GM12878 (cell line): ENCODE measurements at regions of chr6 and their contacts with region 1.

Region 1: GRCh38 chr6:45677381-45678284 is 299.9 kb upstream of the SUPT3H start:
- DNase-seq: peak; percentile 30
- ATAC-seq: peak; percentile 79
- H3K4me3 ChIP-seq: peak overlapping the region; percentile 9; the same call in 1 of the 2 replicates
- H3K27ac ChIP-seq: no peak overlapping the region
- H3K4me1 ChIP-seq: peaks cover 19% of the 10 kb centered on the region
- H3K27me3 ChIP-seq: no peaks in the 10 kb centered on the region; a peak in 2 of 4 replicates
- CTCF ChIP-seq: no peak
- EP300 ChIP-seq: peak; percentile 25 to 40; a peak in 1 of 4 replicates
- POLR2A ChIP-seq: no peak
- RAD21 ChIP-seq: no peak

Region 2: GRCh38 chr6:45640081-45640491 is 37.5 kb before region 1 on chr6:
- CTCF ChIA-PET with region 1: no interaction called
- POLR2A ChIA-PET with region 1: no interaction called
- RAD21 ChIA-PET with region 1: no interaction called
- SMC1A ChIA-PET with region 1: no interaction called
- in situ Hi-C with region 1: no loop called
- intact Hi-C with region 1: no loop called
- DNase-seq: no peak
- ATAC-seq: no peak
- H3K4me3 ChIP-seq: no peak overlapping the region
- H3K27ac ChIP-seq: no peak overlapping the region
- H3K4me1 ChIP-seq: no peaks in the 10 kb centered on the region
- H3K27me3 ChIP-seq: no peaks in the 10 kb centered on the region; a peak in 2 of 4 replicates
- CTCF ChIP-seq: no peak
- EP300 ChIP-seq: no peak
- POLR2A ChIP-seq: no peak
- RAD21 ChIP-seq: no peak

Region 3: GRCh38 chr6:45650524-45651135 is 27.0 kb before region 1 on chr6:
- CTCF ChIA-PET with region 1: no interaction called
- POLR2A ChIA-PET with region 1: no interaction called
- RAD21 ChIA-PET with region 1: no interaction called
- SMC1A ChIA-PET with region 1: no interaction called
- in situ Hi-C with region 1: no loop called
- intact Hi-C with region 1: no loop called
- DNase-seq: no peak
- ATAC-seq: no peak
- H3K4me3 ChIP-seq: no peak overlapping the region
- H3K27ac ChIP-seq: no peak overlapping the region
- H3K4me1 ChIP-seq: no peaks in the 10 kb centered on the region
- H3K27me3 ChIP-seq: peaks cover 0 to 6% of the 10 kb centered on the region in 2 experiments; a peak in 3 of 4 replicates
- CTCF ChIP-seq: no peak
- EP300 ChIP-seq: no peak
- POLR2A ChIP-seq: no peak
- RAD21 ChIP-seq: no peak

Region 4: GRCh38 chr6:45697605-45698004 is 20.0 kb after region 1 on chr6:
- CTCF ChIA-PET with region 1: interaction called, 4 read pairs
- POLR2A ChIA-PET with region 1: no interaction called
- RAD21 ChIA-PET with region 1: no interaction called
- SMC1A ChIA-PET with region 1: no interaction called
- in situ Hi-C with region 1: no loop called
- intact Hi-C with region 1: loop called (anchors 2 kb)
- DNase-seq: no peak
- ATAC-seq: peak; percentile 71
- H3K4me3 ChIP-seq: no peak overlapping the region
- H3K27ac ChIP-seq: no peak overlapping the region
- H3K4me1 ChIP-seq: no peaks in the 10 kb centered on the region; the same call in 1 of the 2 replicates
- H3K27me3 ChIP-seq: no peaks in the 10 kb centered on the region; a peak in 2 of 4 replicates
- CTCF ChIP-seq: no peak
- EP300 ChIP-seq: peak in 1 of 2 experiments; percentile 49; a peak in 1 of 4 replicates
- POLR2A ChIP-seq: no peak
- RAD21 ChIP-seq: no peak

Region 5: GRCh38 chr6:45706319-45706718 is 28.7 kb after region 1 on chr6:
- CTCF ChIA-PET with region 1: interaction called, 4 read pairs
- POLR2A ChIA-PET with region 1: interaction called, 6 read pairs
- RAD21 ChIA-PET with region 1: no interaction called
- SMC1A ChIA-PET with region 1: interaction called, 12 read pairs
- in situ Hi-C with region 1: no loop called
- intact Hi-C with region 1: loop called (anchors 1 kb)
- DNase-seq: no peak
- ATAC-seq: peak; percentile 9
- H3K4me3 ChIP-seq: no peak overlapping the region
- H3K27ac ChIP-seq: no peak overlapping the region
- H3K4me1 ChIP-seq: peaks cover 19% of the 10 kb centered on the region
- H3K27me3 ChIP-seq: no peaks in the 10 kb centered on the region; a peak in 1 of 4 replicates
- CTCF ChIP-seq: no peak
- EP300 ChIP-seq: no peak
- POLR2A ChIP-seq: no peak
- RAD21 ChIP-seq: no peak

Region 6: GRCh38 chr6:45830441-45831139 is 153.0 kb after region 1 on chr6:
- CTCF ChIA-PET with region 1: no interaction called
- POLR2A ChIA-PET with region 1: no interaction called
- RAD21 ChIA-PET with region 1: no interaction called
- SMC1A ChIA-PET with region 1: interaction called, 6 read pairs
- in situ Hi-C with region 1: no loop called
- intact Hi-C with region 1: loop called (anchors 5 kb)
- DNase-seq: peak; percentile 86
- ATAC-seq: peak; percentile 95
- H3K4me3 ChIP-seq: peak overlapping the region; percentile 26; the same call in 1 of the 2 replicates
- H3K27ac ChIP-seq: 0 out of 2 replicates have a peak overlapping the region, but pooled peaks have one; percentile 11
- H3K4me1 ChIP-seq: peaks cover 24% of the 10 kb centered on the region
- H3K27me3 ChIP-seq: no peaks in the 10 kb centered on the region; a peak in 1 of 4 replicates
- CTCF ChIP-seq: no peak
- EP300 ChIP-seq: peak; percentile 83 to 97; a peak in 3 of 4 replicates
- POLR2A ChIP-seq: no peak
- RAD21 ChIP-seq: no peak